Activated CD8-positive, alpha-beta T cell treated with anti-CD3 and anti-CD28 coated beads for 36 hours (primary cell): ENCODE measurements at regions of chr6 and their contacts with region 1.

Region 1: GRCh38 chr6:118697554-118697953 is 46.2 kb upstream of the CEP85L start:
- DNase-seq: no peak
- ATAC-seq: no peak
- H3K4me3 Mint-ChIP-seq: no peak overlapping the region
- H3K27ac Mint-ChIP-seq: no peak overlapping the region
- H3K4me1 Mint-ChIP-seq: peaks cover 81% of the 10 kb centered on the region
- H3K27me3 Mint-ChIP-seq: no peaks in the 10 kb centered on the region
- CTCF ChIP-seq: no peak

Region 2: DNA sequence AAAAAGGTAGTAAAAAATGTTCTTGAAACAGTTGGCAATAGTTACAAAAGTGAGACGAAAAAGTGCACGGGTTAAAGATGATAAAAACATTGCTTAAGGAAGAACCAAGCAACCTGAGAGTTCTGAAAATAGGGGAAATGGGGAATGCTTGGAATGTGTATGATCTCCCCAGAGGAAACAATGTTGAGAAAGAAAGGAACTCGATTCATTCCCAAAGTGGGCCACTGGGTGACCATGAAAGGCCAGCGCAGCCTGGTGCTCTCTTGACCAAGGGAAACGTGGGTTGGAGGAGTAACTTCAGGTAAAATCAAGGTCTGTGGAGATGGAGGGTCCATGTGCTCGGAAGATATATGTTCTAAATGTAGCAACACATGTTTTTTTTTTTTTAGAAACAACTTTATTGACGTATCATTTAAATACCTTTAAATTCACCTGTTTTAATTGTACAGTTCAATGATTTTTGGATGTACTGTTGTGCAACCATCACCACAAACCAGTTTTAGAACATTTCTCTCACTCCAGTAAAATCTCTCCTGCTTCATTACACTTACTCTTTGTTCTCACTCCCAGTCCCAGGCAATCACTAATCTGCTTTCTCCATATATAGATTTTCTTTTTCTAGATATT is 11.6 kb before region 1 on chr6:
- CTCF ChIA-PET with region 1: interaction called, 14 read pairs
- POLR2A ChIA-PET with region 1: interaction called, 8 read pairs
- intact Hi-C with region 1: no loop called
- DNase-seq: no peak
- ATAC-seq: no peak
- H3K4me3 Mint-ChIP-seq: no peak overlapping the region
- H3K27ac Mint-ChIP-seq: peak overlapping the region; percentile 19
- H3K4me1 Mint-ChIP-seq: peaks cover 71% of the 10 kb centered on the region
- H3K27me3 Mint-ChIP-seq: no peaks in the 10 kb centered on the region
- CTCF ChIP-seq: no peak